Heart left ventricle (tissue), 16 donors: ENCODE measurements at regions of chr7 and their contacts with region 1.

Region 1: DNA sequence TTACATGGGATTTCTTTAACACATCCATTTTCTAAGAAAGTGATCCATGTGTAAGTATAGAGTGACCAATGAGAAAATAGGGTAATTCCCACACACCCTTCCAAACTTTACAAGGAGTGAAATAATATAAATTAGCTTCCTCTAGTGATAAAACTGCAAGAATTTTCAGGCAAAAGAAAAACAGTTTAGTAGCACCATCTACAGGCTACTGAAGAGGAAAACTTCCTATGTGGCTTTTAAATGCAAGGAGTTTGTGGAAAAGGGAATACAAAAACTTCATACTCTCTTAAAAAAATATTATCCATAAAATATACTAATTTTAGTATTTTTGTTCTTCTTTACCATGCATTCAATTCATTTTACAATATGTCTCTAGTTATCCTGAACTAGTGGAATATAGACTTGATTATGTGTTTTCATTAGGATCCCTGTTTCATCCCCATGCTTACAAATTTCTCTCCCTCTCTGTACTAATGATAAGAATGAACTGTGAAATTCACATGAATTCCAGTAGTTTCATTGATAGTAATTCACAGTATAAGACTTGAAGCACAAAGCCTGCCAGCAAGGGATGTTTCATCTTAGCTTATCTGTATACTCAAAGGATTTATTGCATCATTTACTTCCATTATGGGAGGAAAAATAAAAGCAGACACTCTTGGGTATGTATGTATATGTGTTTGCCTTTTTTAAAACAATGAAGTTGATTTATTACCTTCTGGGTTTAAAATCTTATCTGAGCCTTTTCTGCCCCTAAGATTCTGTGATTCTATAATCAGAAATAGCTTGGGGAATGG is 442.9 kb downstream of the AUTS2 start:
- DNase-seq: no peak
- ATAC-seq: peak in 1 of 4 donors; percentile 42
- H3K4me3 ChIP-seq: no peak overlapping the region
- H3K27ac ChIP-seq: no peak overlapping the region
- H3K4me1 ChIP-seq: peaks cover 0 to 15% (median 6%) of the 10 kb centered on the region in 12 donors
- H3K27me3 ChIP-seq: no peaks in the 10 kb centered on the region
- CTCF ChIP-seq: peak in 11 of 12 donors; percentile 29 to 69 (median 60)
- POLR2A ChIP-seq: no peak

Region 2: DNA sequence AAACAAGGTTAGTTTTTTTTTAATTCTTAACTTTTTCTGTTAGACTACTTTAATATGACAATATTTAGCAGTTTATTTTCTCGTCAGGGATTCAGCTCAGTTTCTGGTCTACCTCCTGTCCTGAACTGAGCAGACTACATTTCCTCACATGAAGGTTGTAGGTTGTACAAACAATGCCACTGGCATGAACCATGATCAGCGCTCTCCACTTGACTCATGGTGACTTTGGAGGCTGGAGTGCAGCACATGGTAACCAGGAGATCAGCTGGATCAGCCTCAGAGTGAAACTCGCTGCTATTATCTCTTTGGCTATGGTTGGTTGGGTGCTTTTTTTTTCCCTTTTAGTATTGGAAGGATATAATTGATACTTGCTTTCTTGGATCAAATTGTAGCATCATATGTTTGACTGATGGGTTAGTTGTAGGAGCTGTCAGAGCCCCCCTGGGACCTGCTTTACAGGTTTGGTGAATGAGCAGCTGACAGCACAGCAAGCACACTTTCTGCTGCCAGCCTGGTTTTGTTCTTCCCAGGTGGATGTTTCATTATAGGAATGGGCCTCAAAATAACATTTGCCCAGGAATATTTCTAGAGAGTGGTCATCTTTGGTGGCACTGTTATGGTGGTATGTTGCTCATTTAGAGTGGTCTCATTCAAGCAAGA is 113.5 kb after region 1 on chr7:
- intact Hi-C with region 1: loop called in 2 of 10 experiments (anchors 5 to 10 kb)
- DNase-seq: no peak
- ATAC-seq: no peak
- H3K4me3 ChIP-seq: no peak overlapping the region
- H3K27ac ChIP-seq: no peak overlapping the region
- H3K4me1 ChIP-seq: no peaks in the 10 kb centered on the region
- H3K27me3 ChIP-seq: no peaks in the 10 kb centered on the region
- CTCF ChIP-seq: no peak
- POLR2A ChIP-seq: no peak

Region 3: DNA sequence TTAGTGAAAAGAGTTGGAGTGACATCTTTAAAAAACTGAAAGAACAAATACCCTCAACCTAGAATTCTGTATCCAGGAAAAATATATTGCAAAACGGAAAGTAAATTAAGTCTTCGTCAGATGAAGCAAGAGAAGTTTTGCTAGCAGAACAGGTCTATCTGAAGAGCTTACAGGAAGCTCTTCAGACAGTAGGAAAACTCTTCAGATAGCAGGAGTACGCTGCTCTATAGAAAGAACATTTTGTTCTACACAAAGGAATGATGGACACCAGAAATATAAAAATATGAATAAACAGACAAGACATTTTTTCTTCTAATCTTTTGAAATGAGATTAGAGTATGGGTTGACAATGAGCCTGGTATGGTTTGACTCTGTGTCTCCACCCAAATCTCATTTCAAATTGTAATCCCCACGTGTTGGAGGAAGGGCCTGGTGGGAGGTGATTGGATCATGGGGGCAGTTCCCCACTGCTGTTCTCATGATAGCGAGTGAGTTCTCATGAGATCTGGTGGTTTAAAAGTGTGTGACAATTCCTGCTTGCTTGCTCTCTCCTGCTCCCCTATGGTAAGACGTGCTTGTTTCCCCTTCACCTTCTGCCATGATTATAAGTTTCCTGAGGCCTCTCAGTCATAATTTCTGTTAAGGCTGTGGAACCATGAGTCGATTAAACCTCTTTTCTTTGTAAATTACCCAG is 124.5 kb after region 1 on chr7:
- intact Hi-C with region 1: loop called in 8 of 10 experiments (anchors 1 to 10 kb)
- DNase-seq: no peak
- ATAC-seq: no peak
- H3K4me3 ChIP-seq: no peak overlapping the region
- H3K27ac ChIP-seq: no peak overlapping the region
- H3K4me1 ChIP-seq: no peaks in the 10 kb centered on the region
- H3K27me3 ChIP-seq: no peaks in the 10 kb centered on the region
- CTCF ChIP-seq: no peak
- POLR2A ChIP-seq: no peak

Region 4: DNA sequence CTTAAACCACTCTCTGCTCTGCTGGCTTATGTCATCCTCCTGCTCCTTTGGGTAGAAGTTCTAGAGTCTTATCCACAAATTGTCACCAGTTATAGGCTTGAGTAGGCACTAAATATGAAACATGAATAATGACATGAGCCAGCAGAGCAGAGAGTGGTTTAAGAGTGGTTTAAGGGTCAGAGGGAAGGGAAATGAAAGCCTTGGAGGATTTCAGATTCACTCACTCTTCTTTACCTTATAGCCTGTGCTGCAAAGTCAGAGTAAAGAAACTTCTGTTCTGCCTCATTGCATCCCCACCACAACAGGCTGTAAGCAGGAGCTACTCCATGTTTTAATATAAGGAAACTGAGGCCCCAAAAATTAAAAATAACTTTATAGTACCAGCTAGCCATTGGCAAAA is 306.7 kb after region 1 on chr7:
- intact Hi-C with region 1: no loop called
- DNase-seq: no peak
- ATAC-seq: no peak
- H3K4me3 ChIP-seq: no peak overlapping the region
- H3K27ac ChIP-seq: no peak overlapping the region
- H3K4me1 ChIP-seq: peaks cover 0 to 8% (median 0%) of the 10 kb centered on the region in 12 donors
- H3K27me3 ChIP-seq: no peaks in the 10 kb centered on the region
- CTCF ChIP-seq: no peak
- POLR2A ChIP-seq: no peak